Activated CD4-positive, alpha-beta memory T cell treated with anti-CD3 and anti-CD28 coated beads, Interleukin-2, amount 10 ng/mL, durations not matched to agents 7 days and 5 days (primary cell): ENCODE measurements at regions of chr2 and their contacts with region 1.

Region 1: DNA sequence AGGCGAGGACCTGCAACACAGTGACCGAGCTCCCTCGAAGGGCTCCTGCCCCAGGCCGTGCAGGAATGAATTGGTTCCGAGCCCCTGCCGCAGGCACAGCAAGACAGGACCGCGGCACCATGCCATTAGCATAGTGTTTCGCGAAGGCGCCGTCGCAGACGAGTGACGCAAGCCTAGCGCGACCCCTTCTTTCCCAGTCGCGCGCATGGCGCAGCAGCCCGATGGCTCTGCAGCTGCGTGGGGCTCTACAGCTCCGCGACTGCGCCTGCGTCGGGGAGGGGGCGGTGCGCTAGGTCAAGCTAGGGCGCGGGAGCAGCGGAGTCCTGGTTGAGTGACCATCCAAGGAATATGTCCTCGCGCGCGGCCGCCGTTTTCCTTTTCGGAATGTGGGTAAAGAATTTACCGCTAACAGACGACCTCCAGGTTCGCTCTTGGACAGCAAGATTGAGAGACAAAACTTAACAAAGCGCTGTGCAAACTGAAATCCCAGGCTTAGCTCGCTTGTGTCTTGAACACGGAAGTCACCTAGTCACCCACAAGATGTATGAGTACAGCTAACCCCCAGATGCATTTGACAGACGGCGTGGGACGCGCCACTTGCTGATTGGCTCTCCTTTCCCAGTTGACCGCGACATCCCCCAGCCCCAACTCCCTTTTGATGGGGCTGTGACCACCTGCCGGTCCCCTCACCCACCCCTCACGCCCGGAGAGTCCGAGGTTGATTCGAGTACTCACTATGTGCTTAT is at the start of gene TRMT61B:
- DNase-seq: peak; percentile 98
- H3K4me3 Mint-ChIP-seq: peak within 1 kb of the TSS; percentile 96
- H3K27ac Mint-ChIP-seq: peak within 1 kb of the TSS; percentile 95
- H3K4me1 Mint-ChIP-seq: peaks cover 32% of the 10 kb centered on the region
- H3K27me3 Mint-ChIP-seq: peaks cover 2% of the 10 kb centered on the region
- total RNA-seq, gene TRMT61B: 13.1 to 14.1 TPM

Region 2: GRCh38 chr2:28729698-28730097 is 140.6 kb before region 1 on chr2:
- CTCF ChIA-PET with region 1: no interaction called
- POLR2A ChIA-PET with region 1: no interaction called
- DNase-seq: no peak
- H3K4me3 Mint-ChIP-seq: no peak overlapping the region
- H3K27ac Mint-ChIP-seq: no peak overlapping the region
- H3K4me1 Mint-ChIP-seq: peaks cover 5% of the 10 kb centered on the region
- H3K27me3 Mint-ChIP-seq: no peaks in the 10 kb centered on the region

Region 3: GRCh38 chr2:28810384-28811285 is 59.7 kb before region 1 on chr2 and contains the start of gene SPDYA:
- CTCF ChIA-PET with region 1: no interaction called
- POLR2A ChIA-PET with region 1: interaction called, 12 read pairs
- DNase-seq: peak; percentile 86
- H3K4me3 Mint-ChIP-seq: peak within 1 kb of the TSS; percentile 75
- H3K27ac Mint-ChIP-seq: no peak within 1 kb of the TSS
- H3K4me1 Mint-ChIP-seq: peaks cover 20% of the 10 kb centered on the region
- H3K27me3 Mint-ChIP-seq: peaks cover 2% of the 10 kb centered on the region
- total RNA-seq, gene SPDYA: 0.93 to 1.2 TPM

Region 4: GRCh38 chr2:28855193-28855592 is 15.1 kb before region 1 on chr2:
- CTCF ChIA-PET with region 1: interaction called, 3 read pairs
- POLR2A ChIA-PET with region 1: interaction called, 13 read pairs
- DNase-seq: no peak
- H3K4me3 Mint-ChIP-seq: no peak overlapping the region
- H3K27ac Mint-ChIP-seq: no peak overlapping the region
- H3K4me1 Mint-ChIP-seq: no peaks in the 10 kb centered on the region
- H3K27me3 Mint-ChIP-seq: no peaks in the 10 kb centered on the region

Region 5: GRCh38 chr2:28894470-28895177 is 24.3 kb after region 1 on chr2 and contains the start of gene WDR43:
- CTCF ChIA-PET with region 1: interaction called, 10 read pairs
- POLR2A ChIA-PET with region 1: interaction called, 114 read pairs
- DNase-seq: peak; percentile 98
- H3K4me3 Mint-ChIP-seq: peak within 1 kb of the TSS; percentile 91
- H3K27ac Mint-ChIP-seq: peak within 1 kb of the TSS; percentile 87
- H3K4me1 Mint-ChIP-seq: peaks cover 43% of the 10 kb centered on the region
- H3K27me3 Mint-ChIP-seq: no peaks in the 10 kb centered on the region
- total RNA-seq, gene WDR43: 45.5 to 47.2 TPM

Region 6: DNA sequence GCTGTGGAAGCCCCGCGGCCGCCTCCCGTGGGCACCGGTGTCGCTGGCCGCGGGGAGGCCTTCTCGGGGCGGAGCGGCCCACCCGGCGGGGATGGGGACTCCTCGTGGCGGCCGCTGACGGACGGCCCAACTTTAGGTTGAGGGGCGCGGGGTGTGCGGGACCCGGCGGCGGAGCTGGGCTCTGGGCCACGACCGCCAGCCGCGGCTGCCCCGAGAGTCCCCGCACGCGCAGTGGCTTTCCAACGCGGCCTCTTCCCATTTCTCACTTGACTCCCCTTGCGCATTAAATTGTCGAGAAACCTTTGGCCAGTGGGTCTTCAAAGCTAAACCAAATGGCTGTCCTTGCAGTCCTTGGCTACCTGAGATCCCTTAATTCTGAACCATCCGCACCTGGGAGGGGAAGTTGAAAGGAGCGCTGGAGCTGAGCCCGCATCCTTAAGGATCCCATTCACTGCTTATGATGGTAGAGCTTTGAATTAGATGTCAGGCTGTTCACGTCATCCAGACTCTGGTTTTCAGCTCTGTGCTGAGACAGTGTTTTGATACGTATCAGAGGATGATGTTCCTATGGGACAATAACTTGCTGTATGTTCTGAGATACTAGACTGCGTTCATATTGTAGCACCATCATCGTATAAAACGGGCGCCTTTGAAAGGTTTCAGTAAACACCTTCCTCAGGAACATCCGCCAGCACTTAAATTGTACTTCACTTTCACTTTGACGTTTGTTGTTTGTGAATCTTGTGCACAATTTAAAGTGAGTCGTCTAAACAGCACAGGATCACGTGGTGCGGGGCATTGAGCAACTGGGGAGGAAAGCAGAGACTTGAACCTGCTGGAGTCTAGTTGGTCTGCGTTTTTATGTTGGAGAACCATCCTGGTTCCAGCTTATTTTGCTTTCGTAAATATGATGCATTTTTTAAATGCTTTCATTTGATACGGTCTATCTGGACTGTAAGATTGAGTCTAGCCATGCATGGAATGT is 245.8 kb after region 1 on chr2:
- CTCF ChIA-PET with region 1: no interaction called
- POLR2A ChIA-PET with region 1: interaction called, 12 read pairs
- DNase-seq: peak; percentile 88
- H3K4me3 Mint-ChIP-seq: peak overlapping the region; percentile 84
- H3K27ac Mint-ChIP-seq: peak overlapping the region; percentile 97
- H3K4me1 Mint-ChIP-seq: peaks cover 58% of the 10 kb centered on the region
- H3K27me3 Mint-ChIP-seq: peaks cover 6% of the 10 kb centered on the region